Naive thymus-derived CD4-positive, alpha-beta T cell (primary cell): ENCODE measurements at regions of chr3 and their contacts with region 1.

Region 1: DNA sequence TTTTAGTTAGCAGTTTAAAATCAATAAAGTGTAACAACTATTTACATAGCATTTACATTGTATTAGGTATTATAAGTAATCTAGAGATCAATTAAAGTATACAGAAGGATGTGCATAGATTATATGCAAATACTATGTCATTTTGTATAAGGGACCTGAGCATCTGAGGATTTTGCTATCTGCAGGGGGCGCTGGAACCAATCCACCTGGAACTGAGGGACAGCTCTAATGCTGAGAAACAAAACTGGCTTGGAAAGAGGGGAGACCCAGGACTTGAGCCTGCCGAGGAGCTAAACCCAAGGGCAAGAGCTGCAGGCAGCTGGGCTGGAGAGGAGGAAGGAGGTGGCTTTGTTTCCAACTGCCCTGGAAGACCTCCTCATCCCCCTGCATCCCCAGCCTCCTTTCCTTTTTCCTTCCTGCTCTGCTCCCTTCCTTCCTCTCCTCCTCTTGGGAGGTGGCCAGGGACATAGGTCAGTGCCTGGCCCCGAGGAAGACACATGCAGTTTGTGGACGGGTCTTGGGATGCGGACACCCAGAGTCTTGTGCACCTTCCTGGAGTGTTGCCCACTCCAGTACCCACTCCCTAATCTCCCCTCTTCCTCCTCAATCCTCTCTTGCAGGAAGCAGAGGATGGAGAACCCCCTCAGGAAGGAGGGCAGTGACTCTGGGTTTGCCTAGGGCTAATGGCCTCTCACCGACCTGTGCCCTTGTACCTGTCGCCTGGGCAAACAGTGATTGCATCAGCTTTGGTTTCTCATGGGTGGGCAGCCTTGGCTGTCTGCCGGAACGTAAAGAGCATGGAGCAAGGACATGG is 828 bp upstream of the RTP3 start:
- DNase-seq: peak in 7 of 9 donors; percentile 15 to 46 (median 31)
- ATAC-seq: peak; percentile 44
- H3K4me3 ChIP-seq: no peak overlapping the region
- H3K4me3 Mint-ChIP-seq: no peak overlapping the region
- H3K27ac ChIP-seq: no peak overlapping the region
- H3K27ac Mint-ChIP-seq: peak overlapping the region in 2 of 9 donors; percentile 24 to 83
- H3K4me1 ChIP-seq: peaks cover 5% of the 10 kb centered on the region in 2 donors
- H3K4me1 Mint-ChIP-seq: peaks cover 5 to 20% (median 9%) of the 10 kb centered on the region in 7 donors
- H3K27me3 ChIP-seq: no peaks in the 10 kb centered on the region
- H3K27me3 Mint-ChIP-seq: peaks cover 0 to 9% (median 0%) of the 10 kb centered on the region in 5 donors

Region 2: GRCh38 chr3:46480481-46481195 is 16.3 kb before region 1 on chr3:
- CTCF ChIA-PET with region 1: no interaction called
- POLR2A ChIA-PET with region 1: no interaction called
- intact Hi-C with region 1: no loop called
- DNase-seq: no peak
- ATAC-seq: no peak
- H3K4me3 ChIP-seq: no peak overlapping the region
- H3K4me3 Mint-ChIP-seq: no peak overlapping the region
- H3K27ac ChIP-seq: no peak overlapping the region
- H3K27ac Mint-ChIP-seq: no peak overlapping the region
- H3K4me1 ChIP-seq: no peaks in the 10 kb centered on the region
- H3K4me1 Mint-ChIP-seq: peaks cover 0 to 3% (median 0%) of the 10 kb centered on the region in 7 donors
- H3K27me3 ChIP-seq: peaks cover 0 to 4% of the 10 kb centered on the region in 2 donors
- H3K27me3 Mint-ChIP-seq: peaks cover 0 to 45% (median 19%) of the 10 kb centered on the region in 5 donors

Region 3: GRCh38 chr3:46629551-46630517 is 132.9 kb after region 1 on chr3:
- CTCF ChIA-PET with region 1: interaction called, 13 read pairs
- POLR2A ChIA-PET with region 1: no interaction called
- intact Hi-C with region 1: no loop called
- DNase-seq: peak; percentile 61 to 82 (median 77)
- ATAC-seq: peak; percentile 98
- H3K4me3 ChIP-seq: peak overlapping the region; percentile 73
- H3K4me3 Mint-ChIP-seq: peak overlapping the region; percentile 67 to 86 (median 79)
- H3K27ac ChIP-seq: peak overlapping the region; percentile 62
- H3K27ac Mint-ChIP-seq: peak overlapping the region; percentile 76 to 97 (median 90)
- H3K4me1 ChIP-seq: peaks cover 9 to 29% of the 10 kb centered on the region in 2 donors
- H3K4me1 Mint-ChIP-seq: peaks cover 13 to 42% (median 30%) of the 10 kb centered on the region in 7 donors
- H3K27me3 ChIP-seq: no peaks in the 10 kb centered on the region
- H3K27me3 Mint-ChIP-seq: peaks cover 0 to 17% (median 0%) of the 10 kb centered on the region in 5 donors